Activated T-helper 2 cell treated with anti-CD3 and anti-CD28 coated beads, Interferon-gamma antibody, Interleukin-2, Interleukin-4, amounts not matched to agents 10 μg/mL and 5 μg/mL and 100 μg/mL, durations not matched to agents 14 hours and 24 hours and 36 hours (primary cell): ENCODE measurements at regions of chr12 and their contacts with region 1.

Region 1: DNA sequence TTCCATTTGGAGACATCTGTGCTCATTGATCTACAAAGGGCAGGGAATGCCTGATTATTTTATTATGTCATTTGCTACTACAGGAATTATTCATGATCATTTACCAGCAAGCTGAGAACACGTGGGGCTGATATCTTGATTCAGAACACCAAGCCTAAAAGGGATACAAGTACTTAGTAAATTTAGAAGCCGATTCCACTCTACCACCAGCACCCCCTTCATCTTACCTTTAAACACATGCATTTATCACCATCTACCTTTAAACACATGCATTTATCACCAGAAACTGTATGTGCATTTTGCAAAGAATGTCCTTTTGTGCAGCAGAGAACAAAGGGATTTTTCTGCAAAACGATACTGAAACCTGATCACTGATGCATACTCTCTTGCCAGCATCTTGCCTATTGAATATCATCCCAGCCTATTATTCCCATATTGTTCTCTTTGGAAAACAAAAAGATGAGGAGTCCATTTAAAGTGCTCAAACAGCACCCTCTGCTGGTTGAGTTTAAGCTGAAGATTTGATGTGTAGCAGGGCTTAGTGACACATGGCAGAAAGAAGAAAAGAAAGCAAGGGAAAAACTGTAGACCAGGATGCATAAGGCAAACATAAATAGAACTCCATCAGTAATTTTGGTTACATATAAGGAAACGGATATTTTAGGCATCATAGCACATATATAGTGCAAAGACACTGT is 132.6 kb upstream of the PLEKHG7 start:
- DNase-seq: no peak
- H3K4me3 Mint-ChIP-seq: no peak overlapping the region
- H3K27ac Mint-ChIP-seq: no peak overlapping the region
- H3K4me1 Mint-ChIP-seq: peaks cover 20% of the 10 kb centered on the region
- H3K27me3 Mint-ChIP-seq: no peaks in the 10 kb centered on the region

Region 2: GRCh38 chr12:91991399-91992187 is 578.6 kb before region 1 on chr12:
- intact Hi-C with region 1: loop called (anchors 10 kb)
- DNase-seq: no peak
- H3K4me3 Mint-ChIP-seq: no peak overlapping the region
- H3K27ac Mint-ChIP-seq: no peak overlapping the region
- H3K4me1 Mint-ChIP-seq: peaks cover 4% of the 10 kb centered on the region
- H3K27me3 Mint-ChIP-seq: no peaks in the 10 kb centered on the region

Region 3: DNA sequence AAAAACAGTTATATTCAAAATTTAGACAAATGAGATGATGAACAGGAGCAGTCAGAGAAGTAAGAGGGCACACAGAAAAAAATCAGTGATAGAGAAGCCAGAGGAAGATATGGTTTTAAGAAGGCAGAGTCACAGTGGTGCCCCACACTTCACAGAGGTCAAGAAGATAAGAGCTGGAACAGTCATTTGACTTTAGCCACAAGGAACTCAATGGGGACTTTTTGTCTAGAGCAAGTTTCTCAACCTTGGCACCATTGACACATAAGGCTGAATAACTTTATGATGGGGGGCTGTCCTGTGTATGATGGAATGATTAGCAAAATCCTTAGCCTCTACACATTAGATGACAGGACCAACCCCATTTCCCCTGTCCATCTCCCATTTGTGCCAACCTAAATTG is 40.3 kb before region 1 on chr12:
- intact Hi-C with region 1: no loop called
- DNase-seq: no peak
- H3K4me3 Mint-ChIP-seq: no peak overlapping the region
- H3K27ac Mint-ChIP-seq: peak overlapping the region; percentile 54
- H3K4me1 Mint-ChIP-seq: peaks cover 24% of the 10 kb centered on the region
- H3K27me3 Mint-ChIP-seq: no peaks in the 10 kb centered on the region

Region 4: GRCh38 chr12:92602476-92602875 is 32.3 kb after region 1 on chr12:
- intact Hi-C with region 1: no loop called
- DNase-seq: no peak
- H3K4me3 Mint-ChIP-seq: no peak overlapping the region
- H3K27ac Mint-ChIP-seq: peak overlapping the region; percentile 34
- H3K4me1 Mint-ChIP-seq: peaks cover 33% of the 10 kb centered on the region
- H3K27me3 Mint-ChIP-seq: no peaks in the 10 kb centered on the region